ENCODE measurements at regions of chr17 and their contacts with region 1.

Region 1: GRCh38 chr17:37744961-37745800 is at the start of gene HNF1B:
- DNase-seq: peak; percentile 67
- ATAC-seq: peak; percentile 73
- H3K4me3 Mint-ChIP-seq: peak within 1 kb of the TSS; percentile 97
- H3K27ac Mint-ChIP-seq: peak within 1 kb of the TSS; percentile 90
- H3K4me1 Mint-ChIP-seq: peaks cover 49% of the 10 kb centered on the region
- H3K27me3 Mint-ChIP-seq: peaks cover 39% of the 10 kb centered on the region
- CTCF ChIP-seq: no peak
- total RNA-seq, gene HNF1B: 36.3 and 40.0 TPM in 2 replicates

Region 2: DNA sequence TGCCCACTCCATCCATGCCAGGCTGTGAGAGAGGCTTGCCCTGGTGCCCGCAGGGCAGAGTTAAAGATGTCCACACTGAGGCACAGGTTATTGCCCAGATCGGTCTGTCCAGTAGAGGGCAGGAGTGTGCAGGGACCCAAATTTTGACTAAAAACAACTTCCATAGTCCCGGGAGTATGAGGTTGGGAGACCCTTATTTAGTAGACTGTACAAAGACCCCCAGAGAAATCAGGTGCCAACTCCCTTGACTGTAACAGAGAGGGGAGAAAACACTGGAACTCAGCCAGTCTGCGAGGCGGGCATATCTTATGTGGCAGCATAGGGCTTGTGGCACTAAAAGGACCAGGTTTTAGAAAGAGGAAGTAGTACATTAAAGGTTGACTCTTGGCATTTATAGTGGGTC is 43.7 kb before region 1 on chr17:
- CTCF ChIA-PET with region 1: interaction called, 3 read pairs
- POLR2A ChIA-PET with region 1: interaction called, 7 read pairs
- intact Hi-C with region 1: loop called (anchors 2 kb)
- DNase-seq: peak; percentile 44
- ATAC-seq: peak; percentile 84
- H3K4me3 Mint-ChIP-seq: peak overlapping the region; percentile 76
- H3K27ac Mint-ChIP-seq: peak overlapping the region; percentile 57
- H3K4me1 Mint-ChIP-seq: peaks cover 17% of the 10 kb centered on the region
- H3K27me3 Mint-ChIP-seq: peaks cover 6% of the 10 kb centered on the region
- CTCF ChIP-seq: peak; percentile 84

Region 3: GRCh38 chr17:37761059-37761458 is 15.9 kb after region 1 on chr17:
- CTCF ChIA-PET with region 1: interaction called, 3 read pairs
- POLR2A ChIA-PET with region 1: interaction called, 31 read pairs
- intact Hi-C with region 1: loop called (anchors 1 kb)
- DNase-seq: no peak
- ATAC-seq: peak; percentile 68
- H3K4me3 Mint-ChIP-seq: peak overlapping the region; percentile 50
- H3K27ac Mint-ChIP-seq: no peak overlapping the region
- H3K4me1 Mint-ChIP-seq: peaks cover 21% of the 10 kb centered on the region
- H3K27me3 Mint-ChIP-seq: peaks cover 26% of the 10 kb centered on the region
- CTCF ChIP-seq: no peak

Region 4: DNA sequence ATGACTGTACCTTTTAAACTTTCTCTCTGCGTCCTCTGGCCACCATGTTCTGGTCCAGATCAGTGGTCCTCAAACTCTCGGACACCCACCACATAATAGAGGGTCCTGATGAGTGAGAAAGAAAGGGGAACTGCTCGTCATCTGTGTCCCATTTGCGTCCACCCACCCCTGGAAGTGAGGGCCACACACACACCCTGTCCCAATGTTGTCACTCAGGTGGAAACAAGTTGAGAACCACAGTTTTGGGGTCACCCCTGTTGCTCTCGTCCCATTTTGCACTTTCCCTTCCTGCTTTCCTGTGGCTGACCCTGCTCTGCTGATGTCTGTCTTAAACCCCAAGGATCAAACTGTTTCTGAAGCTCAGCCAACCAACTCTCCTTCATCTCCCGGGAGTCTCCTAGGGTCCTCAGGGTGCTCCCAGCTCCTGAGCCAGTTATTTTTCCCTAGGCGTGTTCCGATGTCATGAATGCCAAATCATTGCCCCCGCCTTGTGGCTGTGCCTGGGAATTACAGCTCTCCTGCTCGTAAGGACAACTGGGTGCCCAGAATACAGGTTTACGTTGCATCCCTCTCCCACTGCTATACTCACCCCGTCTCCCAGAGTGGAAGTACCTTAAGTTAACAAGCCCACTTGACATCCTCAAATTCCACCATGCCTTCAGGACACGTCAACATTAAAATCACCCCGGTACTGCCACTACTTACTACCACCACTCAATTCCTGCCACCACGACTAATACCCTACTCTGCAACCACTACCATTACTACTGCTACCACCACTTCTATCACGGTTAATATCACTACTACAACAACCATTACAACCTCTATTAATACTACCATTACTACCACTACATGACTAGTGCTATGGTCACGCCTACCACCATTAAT is 25.7 kb after region 1 on chr17:
- CTCF ChIA-PET with region 1: interaction called, 11 read pairs
- POLR2A ChIA-PET with region 1: interaction called, 112 read pairs
- intact Hi-C with region 1: loop called (anchors 1 kb)
- DNase-seq: no peak
- ATAC-seq: no peak
- H3K4me3 Mint-ChIP-seq: no peak overlapping the region
- H3K27ac Mint-ChIP-seq: no peak overlapping the region
- H3K4me1 Mint-ChIP-seq: peaks cover 71% of the 10 kb centered on the region
- H3K27me3 Mint-ChIP-seq: no peaks in the 10 kb centered on the region
- CTCF ChIP-seq: no peak

Measured in activated B cell treated with CpG ODN at 0.5 μM for 24 hours (primary cell).